SK-N-SH (cell line): ENCODE measurements at regions of chr7 and their contacts with region 1.

Region 1: DNA sequence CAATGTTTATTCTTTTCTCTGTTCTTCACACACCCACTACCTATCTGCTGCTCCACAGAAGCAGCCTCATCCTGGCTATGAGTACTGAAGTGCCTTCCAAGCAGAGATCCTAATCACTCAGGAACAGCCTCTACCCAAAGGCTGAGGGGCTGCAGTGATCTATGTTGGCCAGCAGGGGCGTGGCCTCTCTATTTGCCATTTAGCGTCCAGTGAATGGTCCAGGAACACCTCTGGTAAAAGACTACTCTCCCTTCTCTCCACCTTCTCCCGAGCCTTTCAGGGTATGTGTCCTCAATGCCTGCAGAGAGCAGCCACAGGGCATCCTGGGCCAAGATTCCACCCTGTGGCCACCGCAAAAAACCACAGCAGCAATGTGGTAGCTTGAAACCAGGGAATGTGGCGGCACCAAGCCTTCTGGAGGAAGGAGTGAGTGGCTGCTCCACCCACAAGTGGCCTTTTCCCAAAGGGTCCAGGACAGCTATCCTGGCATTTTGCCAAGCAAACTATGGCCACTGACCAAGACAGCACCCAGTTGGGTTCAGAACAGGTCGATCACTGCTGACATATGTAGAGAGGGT is 70.9 kb downstream of the SYPL1 start:
- DNase-seq: peak; percentile 80
- H3K4me3 ChIP-seq: no peak overlapping the region; a peak in 1 of 4 replicates
- H3K27ac ChIP-seq: no peak overlapping the region
- H3K4me1 ChIP-seq: peaks cover 4 to 28% of the 10 kb centered on the region in 2 experiments; a peak in 2 of 4 replicates
- H3K27me3 ChIP-seq: no peaks in the 10 kb centered on the region
- CTCF ChIP-seq: peak; percentile 89
- EP300 ChIP-seq: 0 out of 4 replicates have a peak, but pooled peaks of 1 of the 2 experiments have one; percentile 18
- RAD21 ChIP-seq: peak; percentile 60

Region 2: DNA sequence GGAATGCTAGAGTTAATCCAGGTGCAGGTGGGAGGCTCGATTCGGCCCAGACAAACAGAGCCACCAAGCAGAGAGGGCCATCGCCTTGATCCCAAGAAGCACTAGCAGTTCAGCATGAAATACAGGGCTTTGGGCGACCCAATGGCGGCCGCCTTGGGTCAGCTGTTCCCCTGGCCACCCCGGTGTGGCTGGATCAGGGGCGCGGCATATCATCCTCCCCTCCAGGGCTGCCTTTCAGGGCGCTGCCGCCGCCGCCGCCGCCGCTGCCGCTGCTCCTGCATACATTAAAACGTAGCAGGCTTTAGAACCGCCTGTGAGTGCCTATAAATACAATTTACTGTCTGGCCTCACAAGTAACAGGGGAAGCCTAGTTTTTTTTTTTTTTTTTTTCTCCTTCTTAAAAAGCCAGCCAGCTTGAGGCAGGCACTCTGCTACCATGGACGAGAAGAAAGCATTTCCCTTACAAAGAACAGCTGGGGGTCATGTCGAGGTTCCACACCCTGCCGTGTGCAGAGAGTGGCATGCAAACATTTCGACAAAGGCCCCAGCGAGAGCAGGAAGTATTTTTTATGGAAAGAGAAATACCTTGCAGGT is 402.2 kb before region 1 on chr7:
- CTCF ChIA-PET with region 1: interaction called, 12 read pairs
- POLR2A ChIA-PET with region 1: no interaction called
- DNase-seq: no peak
- H3K4me3 ChIP-seq: no peak overlapping the region
- H3K27ac ChIP-seq: no peak overlapping the region
- H3K4me1 ChIP-seq: peaks cover 0 to 15% of the 10 kb centered on the region in 2 experiments; a peak in 1 of 4 replicates
- H3K27me3 ChIP-seq: no peaks in the 10 kb centered on the region
- CTCF ChIP-seq: no peak
- EP300 ChIP-seq: no peak
- RAD21 ChIP-seq: no peak

Region 3: GRCh38 chr7:105743351-105744090 is 297.7 kb before region 1 on chr7:
- CTCF ChIA-PET with region 1: interaction called, 70 read pairs
- POLR2A ChIA-PET with region 1: no interaction called
- DNase-seq: no peak
- H3K4me3 ChIP-seq: no peak overlapping the region
- H3K27ac ChIP-seq: no peak overlapping the region
- H3K4me1 ChIP-seq: no peaks in the 10 kb centered on the region; a peak in 1 of 4 replicates
- H3K27me3 ChIP-seq: no peaks in the 10 kb centered on the region
- CTCF ChIP-seq: no peak
- EP300 ChIP-seq: no peak
- RAD21 ChIP-seq: no peak

Region 4: DNA sequence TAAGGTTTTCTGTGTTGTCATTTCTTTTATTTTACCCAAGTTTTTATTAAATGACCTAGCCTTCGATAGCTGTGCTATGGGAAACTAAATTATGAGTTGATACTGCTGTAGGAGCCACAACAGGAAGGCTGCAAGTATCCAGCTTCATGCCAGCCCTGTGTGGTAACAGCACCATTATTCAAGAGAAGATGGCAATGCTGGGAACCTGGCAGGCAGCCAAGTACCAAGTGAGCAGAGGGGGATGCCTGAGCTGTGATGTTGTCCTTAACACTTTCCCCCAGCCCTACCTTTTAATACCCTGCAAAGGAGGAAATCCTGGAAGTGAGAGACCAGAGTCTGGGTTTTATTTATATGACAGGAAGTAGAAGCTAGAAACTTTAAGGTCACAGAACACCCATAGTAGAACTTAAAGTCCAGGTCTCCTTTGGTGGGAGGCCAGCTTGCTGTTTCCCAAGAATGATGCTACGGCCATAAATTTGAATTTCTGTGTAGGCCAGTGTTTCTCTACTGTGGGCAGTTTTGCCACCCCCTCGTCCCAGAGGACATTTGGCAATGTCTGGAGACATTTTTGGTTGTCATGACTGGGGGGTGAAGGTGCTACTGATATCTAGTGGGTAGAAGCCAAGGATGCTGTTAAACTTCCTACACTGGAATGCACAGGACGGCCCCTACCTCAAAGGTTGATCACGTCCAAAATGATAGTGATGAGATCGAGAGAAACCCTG is 155.7 kb before region 1 on chr7:
- CTCF ChIA-PET with region 1: interaction called, 23 read pairs
- POLR2A ChIA-PET with region 1: no interaction called
- DNase-seq: peak; percentile 58
- H3K4me3 ChIP-seq: no peak overlapping the region
- H3K27ac ChIP-seq: peak overlapping the region in 1 of 2 experiments; percentile 31; a peak in 1 of 4 replicates
- H3K4me1 ChIP-seq: peaks cover 9 to 23% of the 10 kb centered on the region in 2 experiments; a peak in 3 of 4 replicates
- H3K27me3 ChIP-seq: no peaks in the 10 kb centered on the region
- CTCF ChIP-seq: no peak
- EP300 ChIP-seq: no peak
- RAD21 ChIP-seq: no peak

Region 5: GRCh38 chr7:105990726-105991453 is 50.3 kb before region 1 on chr7:
- CTCF ChIA-PET with region 1: interaction called, 15 read pairs
- POLR2A ChIA-PET with region 1: no interaction called
- DNase-seq: no peak
- H3K4me3 ChIP-seq: no peak overlapping the region
- H3K27ac ChIP-seq: no peak overlapping the region
- H3K4me1 ChIP-seq: peaks cover 7 to 16% of the 10 kb centered on the region in 2 experiments
- H3K27me3 ChIP-seq: no peaks in the 10 kb centered on the region; the same call in 1 of the 2 replicates
- CTCF ChIP-seq: no peak; the same call in 1 of the 2 replicates
- EP300 ChIP-seq: no peak
- RAD21 ChIP-seq: 0 out of 2 replicates have a peak, but pooled peaks have one; percentile 1

Region 6: GRCh38 chr7:106112117-106112971 is 71.1 kb after region 1 on chr7 and contains the start of gene SYPL1:
- CTCF ChIA-PET with region 1: interaction called, 11 read pairs
- POLR2A ChIA-PET with region 1: no interaction called
- DNase-seq: peak; percentile 99
- H3K4me3 ChIP-seq: peak within 1 kb of the TSS; percentile 80 to 91
- H3K27ac ChIP-seq: peak within 1 kb of the TSS; percentile 91 to 95
- H3K4me1 ChIP-seq: peaks cover 14 to 21% of the 10 kb centered on the region in 2 experiments; a peak in 3 of 4 replicates
- H3K27me3 ChIP-seq: no peaks in the 10 kb centered on the region
- CTCF ChIP-seq: peak; percentile 39
- EP300 ChIP-seq: no peak; a peak in 1 of 4 replicates
- RAD21 ChIP-seq: peak; percentile 9; the same call in 1 of the 2 replicates
- polyA plus RNA-seq, gene SYPL1: 72.4 and 98.7 TPM in 2 replicates

Region 7: DNA sequence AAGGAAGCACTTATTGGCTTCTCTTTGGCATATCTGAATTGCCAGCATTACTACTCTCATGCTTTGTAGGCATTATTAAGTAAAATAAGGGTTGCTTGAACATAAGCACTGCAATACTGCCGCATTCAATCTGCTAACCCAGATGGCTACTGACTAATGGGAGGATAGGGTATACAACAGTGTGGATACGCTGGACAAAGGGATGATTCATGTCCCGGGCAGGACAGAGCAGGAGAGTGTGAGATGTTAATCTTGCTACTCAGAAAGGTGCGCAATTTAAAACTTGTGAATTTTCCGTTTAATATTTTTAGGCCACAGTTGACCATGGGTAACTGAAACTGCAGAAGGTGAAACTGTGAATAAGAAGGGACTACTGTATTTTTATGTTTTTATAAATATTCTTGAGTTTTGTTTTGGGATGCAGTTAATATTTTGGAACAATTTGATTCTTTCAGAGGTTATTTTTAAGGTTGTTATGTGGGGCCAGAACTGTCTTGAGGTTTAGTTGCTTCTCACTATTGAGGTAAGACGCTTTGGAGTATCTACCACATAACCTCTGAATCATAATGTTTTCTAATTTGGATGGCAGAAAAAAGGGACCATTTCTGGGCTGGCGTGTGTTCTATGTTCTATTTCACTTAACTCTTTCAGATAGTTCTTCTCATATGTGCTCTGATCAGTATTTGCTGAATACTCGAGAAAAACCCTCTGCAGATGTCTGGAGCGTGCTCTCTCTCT is 146.6 kb after region 1 on chr7:
- CTCF ChIA-PET with region 1: no interaction called
- POLR2A ChIA-PET with region 1: no interaction called
- DNase-seq: no peak
- H3K4me3 ChIP-seq: no peak overlapping the region
- H3K27ac ChIP-seq: no peak overlapping the region
- H3K4me1 ChIP-seq: no peaks in the 10 kb centered on the region
- H3K27me3 ChIP-seq: no peaks in the 10 kb centered on the region
- CTCF ChIP-seq: no peak
- EP300 ChIP-seq: no peak
- RAD21 ChIP-seq: no peak

Region 8: GRCh38 chr7:106273009-106273668 is 231.9 kb after region 1 on chr7:
- CTCF ChIA-PET with region 1: no interaction called
- POLR2A ChIA-PET with region 1: no interaction called
- DNase-seq: no peak
- H3K4me3 ChIP-seq: no peak overlapping the region
- H3K27ac ChIP-seq: no peak overlapping the region
- H3K4me1 ChIP-seq: no peaks in the 10 kb centered on the region; a peak in 1 of 4 replicates
- H3K27me3 ChIP-seq: no peaks in the 10 kb centered on the region
- CTCF ChIP-seq: no peak
- EP300 ChIP-seq: no peak
- RAD21 ChIP-seq: no peak